Mammary epithelial cell (primary cell): ENCODE measurements at regions of chr16 and their contacts with region 1.

Region 1: GRCh38 chr16:81035398-81035974 is at the start of gene ATMIN:
- DNase-seq: peak; percentile 82
- H3K4me3 ChIP-seq: peak within 1 kb of the TSS; percentile 65 to 86 (median 84)
- H3K27ac ChIP-seq: peak within 1 kb of the TSS; percentile 66
- H3K4me1 ChIP-seq: peaks cover 13% of the 10 kb centered on the region
- H3K27me3 ChIP-seq: no peaks in the 10 kb centered on the region
- CTCF ChIP-seq: peak; percentile 80 to 95
- total RNA-seq, gene ATMIN: 31.7 to 60.8 TPM

Region 2: GRCh38 chr16:80924372-80924978 is 111.0 kb before region 1 on chr16:
- CTCF ChIA-PET with region 1: no interaction called
- dilution Hi-C with region 1: no loop called
- in situ Hi-C with region 1: no loop called
- intact Hi-C with region 1: loop called (anchors 1 kb)
- DNase-seq: peak; percentile 16
- H3K4me3 ChIP-seq: no peak overlapping the region
- H3K27ac ChIP-seq: no peak overlapping the region
- H3K4me1 ChIP-seq: no peaks in the 10 kb centered on the region
- H3K27me3 ChIP-seq: no peaks in the 10 kb centered on the region
- CTCF ChIP-seq: peak in 1 of 2 donors; percentile 25

Region 3: DNA sequence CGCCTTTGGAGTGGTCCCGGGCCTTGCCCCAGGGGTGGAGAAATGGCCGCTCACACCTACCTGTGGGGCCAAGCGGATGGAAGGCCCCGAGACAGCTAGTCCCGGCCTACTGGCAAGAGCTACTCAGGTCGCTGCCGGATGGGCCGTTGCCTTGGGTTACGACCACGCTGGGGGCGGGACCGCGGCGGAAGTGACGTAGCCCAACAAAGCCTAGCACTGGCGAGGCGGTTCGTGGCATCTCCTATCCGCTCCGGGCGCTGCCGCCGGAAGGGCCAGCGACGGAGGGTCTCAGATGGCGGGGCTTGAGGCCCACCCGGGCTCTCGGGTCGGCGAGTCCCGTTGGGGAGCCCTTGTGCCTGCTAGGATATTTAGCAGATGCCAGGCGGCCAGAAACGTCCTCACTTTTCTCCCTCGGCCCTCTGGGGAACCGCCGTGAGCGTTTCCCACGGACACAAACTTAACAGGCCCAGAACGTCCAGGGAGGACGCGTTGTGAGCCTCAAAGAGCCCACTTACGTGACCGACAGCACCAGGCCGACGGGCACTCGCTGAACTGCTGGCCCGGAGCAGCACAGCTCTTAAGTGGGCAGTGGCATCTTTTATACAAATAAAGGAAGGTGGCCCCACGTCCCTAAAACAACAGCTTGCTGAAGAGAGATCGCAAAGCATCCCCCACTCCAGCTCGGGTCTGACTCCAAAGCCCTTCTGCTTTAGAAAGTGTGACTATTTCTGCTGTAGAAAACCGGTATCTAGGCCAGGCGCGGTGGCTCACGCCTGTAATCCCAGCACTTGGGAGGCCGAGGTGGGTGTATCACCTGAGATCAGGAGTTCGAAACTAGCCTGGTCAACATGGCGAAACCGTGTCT is 41.8 kb after region 1 on chr16 and contains the start of gene C16orf46:
- CTCF ChIA-PET with region 1: interaction called, 6 read pairs
- dilution Hi-C with region 1: loop called (anchors 5 kb)
- in situ Hi-C with region 1: no loop called
- intact Hi-C with region 1: loop called (anchors 1 kb)
- DNase-seq: peak; percentile 94
- H3K4me3 ChIP-seq: peak within 1 kb of the TSS; percentile 61 to 89 (median 64)
- H3K27ac ChIP-seq: peak within 1 kb of the TSS; percentile 85
- H3K4me1 ChIP-seq: peaks cover 9% of the 10 kb centered on the region
- H3K27me3 ChIP-seq: no peaks in the 10 kb centered on the region
- CTCF ChIP-seq: no peak
- total RNA-seq, gene C16orf46: 0.17 to 0.99 TPM

Region 4: DNA sequence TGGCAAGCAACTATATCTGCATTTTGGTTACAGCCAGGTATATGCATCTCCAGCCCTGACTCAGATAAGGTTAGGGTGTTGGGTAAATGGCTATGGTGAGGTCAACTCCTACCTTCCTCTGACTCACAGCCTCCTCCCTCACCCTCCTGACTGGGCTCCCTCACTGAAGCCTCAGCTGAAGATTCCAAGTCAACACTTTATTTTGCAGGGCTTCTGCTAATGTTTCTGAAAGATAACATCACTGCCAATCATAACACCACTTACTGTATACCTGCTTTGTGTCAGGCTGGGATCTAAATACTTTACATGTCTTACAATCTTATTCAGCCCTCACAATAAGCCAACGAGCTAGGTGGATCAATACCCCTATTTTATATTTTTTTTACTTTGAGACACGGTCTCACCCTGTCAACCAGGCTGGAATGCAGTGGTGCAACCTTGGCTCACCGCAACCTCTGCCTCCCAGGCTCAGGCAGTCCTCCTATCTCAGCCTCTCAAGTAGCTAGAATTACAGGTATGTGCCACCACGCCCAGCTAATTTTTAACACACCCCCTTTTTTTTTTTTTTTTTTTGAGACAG is 108.5 kb after region 1 on chr16:
- CTCF ChIA-PET with region 1: interaction called, 11 read pairs
- dilution Hi-C with region 1: no loop called
- in situ Hi-C with region 1: no loop called
- intact Hi-C with region 1: loop called (anchors 1 kb)
- DNase-seq: peak; percentile 97
- H3K4me3 ChIP-seq: no peak overlapping the region
- H3K27ac ChIP-seq: peak overlapping the region; percentile 60
- H3K4me1 ChIP-seq: peaks cover 26% of the 10 kb centered on the region
- H3K27me3 ChIP-seq: no peaks in the 10 kb centered on the region
- CTCF ChIP-seq: no peak

Region 5: DNA sequence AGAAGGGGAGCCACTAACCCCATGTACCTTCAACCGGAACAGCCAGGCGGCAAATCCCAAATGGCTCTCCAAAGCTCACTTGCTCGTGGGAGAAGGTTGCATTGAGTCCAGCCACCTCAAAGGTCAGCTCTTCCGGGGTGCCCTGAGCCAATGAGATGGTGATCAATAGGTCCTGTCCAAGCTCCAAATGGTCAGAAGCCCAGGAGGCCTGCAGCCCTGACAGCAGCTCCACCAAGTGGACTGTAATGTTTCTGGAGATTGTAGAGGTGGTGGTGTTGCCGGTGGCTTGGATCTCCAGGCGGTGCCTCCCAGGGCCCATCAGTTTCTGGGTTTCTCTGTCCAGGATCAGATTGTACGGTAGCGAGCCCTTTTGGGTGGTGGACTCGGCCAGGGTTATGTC is 163.1 kb after region 1 on chr16:
- CTCF ChIA-PET with region 1: no interaction called
- dilution Hi-C with region 1: no loop called
- in situ Hi-C with region 1: no loop called
- intact Hi-C with region 1: loop called (anchors 1 kb)
- DNase-seq: no peak
- H3K4me3 ChIP-seq: no peak overlapping the region
- H3K27ac ChIP-seq: no peak overlapping the region
- H3K4me1 ChIP-seq: no peaks in the 10 kb centered on the region
- H3K27me3 ChIP-seq: peaks cover 1% of the 10 kb centered on the region
- CTCF ChIP-seq: peak; percentile 13 to 50

Region 6: DNA sequence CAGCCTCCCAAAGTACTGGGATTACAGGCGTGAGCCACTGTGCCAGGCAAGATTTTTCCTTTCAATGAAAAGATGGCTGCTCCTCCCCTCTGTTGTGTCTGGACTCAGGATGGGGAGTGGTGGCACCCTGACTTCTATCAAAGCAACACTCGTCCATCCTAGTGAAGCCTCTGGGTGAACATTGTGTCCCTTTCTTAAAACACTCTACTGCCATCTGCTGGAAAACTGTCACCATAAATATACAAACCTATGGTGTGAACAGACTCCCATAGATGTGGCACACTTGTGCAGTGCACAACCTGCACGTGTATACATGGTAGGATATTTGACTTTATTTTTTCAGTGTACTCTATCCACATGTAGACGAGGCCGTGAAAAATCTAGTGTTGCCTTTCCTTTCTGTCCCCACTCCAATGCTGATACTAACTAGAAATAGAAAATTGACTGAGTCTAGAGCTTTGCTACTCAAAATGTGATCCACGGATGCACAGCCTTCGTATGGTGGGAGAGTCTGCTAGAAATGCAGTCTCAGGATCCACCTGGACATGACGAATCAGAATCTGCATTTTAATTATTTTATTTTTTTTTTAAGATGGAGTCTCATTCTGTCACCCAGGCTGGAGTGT is 687.7 kb after region 1 on chr16:
- CTCF ChIA-PET with region 1: no interaction called
- dilution Hi-C with region 1: no loop called
- in situ Hi-C with region 1: loop called (anchors 25 kb)
- intact Hi-C with region 1: loop called (anchors 5 kb)
- DNase-seq: peak; percentile 73
- H3K4me3 ChIP-seq: no peak overlapping the region
- H3K27ac ChIP-seq: no peak overlapping the region
- H3K4me1 ChIP-seq: peaks cover 8% of the 10 kb centered on the region
- H3K27me3 ChIP-seq: no peaks in the 10 kb centered on the region
- CTCF ChIP-seq: peak; percentile 50 to 66